Naive thymus-derived CD4-positive, alpha-beta T cell (primary cell): ENCODE measurements at regions of chr1 and their contacts with region 1.

Region 1: GRCh38 chr1:235971571-235972310 is 93.1 kb downstream of the NID1 start:
- DNase-seq: peak; percentile 71 to 87 (median 84)
- ATAC-seq: peak; percentile 98
- H3K4me3 ChIP-seq: peak overlapping the region; percentile 14
- H3K4me3 Mint-ChIP-seq: peak overlapping the region; percentile 67 to 82 (median 76)
- H3K27ac ChIP-seq: peak overlapping the region; percentile 59
- H3K27ac Mint-ChIP-seq: peak overlapping the region; percentile 87 to 95 (median 90)
- H3K4me1 ChIP-seq: peaks cover 9 to 14% of the 10 kb centered on the region in 2 donors
- H3K4me1 Mint-ChIP-seq: peaks cover 9 to 19% (median 13%) of the 10 kb centered on the region in 7 donors
- H3K27me3 ChIP-seq: no peaks in the 10 kb centered on the region
- H3K27me3 Mint-ChIP-seq: peaks cover 0 to 26% (median 0%) of the 10 kb centered on the region in 5 donors

Region 2: GRCh38 chr1:235093696-235094592 is 877.8 kb before region 1 on chr1:
- CTCF ChIA-PET with region 1: no interaction called
- POLR2A ChIA-PET with region 1: no interaction called
- intact Hi-C with region 1: loop called (anchors 5 kb)
- DNase-seq: peak; percentile 67 to 89 (median 80)
- ATAC-seq: peak; percentile 97
- H3K4me3 ChIP-seq: no peak overlapping the region
- H3K4me3 Mint-ChIP-seq: peak overlapping the region in 1 of 10 donors; percentile 41
- H3K27ac ChIP-seq: no peak overlapping the region
- H3K27ac Mint-ChIP-seq: peak overlapping the region in 3 of 9 donors; percentile 49 to 88 (median 50)
- H3K4me1 ChIP-seq: peaks cover 0 to 3% of the 10 kb centered on the region in 2 donors
- H3K4me1 Mint-ChIP-seq: peaks cover 6 to 14% (median 7%) of the 10 kb centered on the region in 7 donors
- H3K27me3 ChIP-seq: no peaks in the 10 kb centered on the region
- H3K27me3 Mint-ChIP-seq: peaks cover 0 to 6% (median 0%) of the 10 kb centered on the region in 5 donors

Region 3: DNA sequence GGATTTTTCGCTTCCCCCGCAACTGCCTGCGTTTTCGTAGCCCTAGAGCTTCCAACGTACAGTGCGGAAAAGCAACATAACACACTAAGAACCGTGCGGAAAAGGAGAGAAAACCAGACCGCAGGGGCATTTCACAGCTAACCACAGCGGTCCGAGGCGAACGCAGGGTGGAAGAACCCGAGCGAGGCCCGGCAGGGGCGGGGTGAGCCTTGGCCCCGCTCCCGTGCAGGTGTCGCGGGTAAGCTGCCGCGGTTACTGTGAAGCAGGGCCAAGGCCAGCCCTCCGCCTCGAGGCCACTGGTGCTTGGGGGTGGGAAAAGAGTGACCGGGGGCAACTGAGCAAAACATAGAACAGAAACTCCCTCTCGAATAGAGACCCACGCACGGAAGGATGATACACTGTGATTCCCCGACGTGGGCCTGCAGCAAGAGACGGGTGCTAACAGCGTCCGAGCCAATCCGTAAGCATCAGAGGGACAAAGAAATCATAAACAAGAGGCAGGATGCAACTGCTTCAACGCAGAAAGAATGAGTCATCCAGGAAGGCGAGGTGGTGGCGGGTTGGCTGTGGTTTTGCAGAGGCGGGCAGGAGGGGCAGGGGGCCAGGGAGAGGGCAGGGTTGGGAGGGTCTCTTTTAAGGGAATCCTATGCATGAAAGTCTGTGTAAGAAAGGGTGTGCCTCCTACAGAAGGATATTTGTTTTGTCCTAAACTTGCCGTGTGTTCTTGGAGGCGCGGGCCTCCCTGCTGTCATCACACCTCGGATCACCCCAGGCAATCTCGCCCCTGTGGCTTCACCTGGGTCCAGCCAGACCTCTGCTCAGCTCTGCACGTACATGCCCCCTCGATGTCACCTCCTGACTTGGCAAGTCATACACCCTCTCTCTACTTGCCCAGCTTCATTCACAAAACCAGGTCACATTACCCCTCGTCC is 329.5 kb before region 1 on chr1:
- CTCF ChIA-PET with region 1: no interaction called
- POLR2A ChIA-PET with region 1: no interaction called
- intact Hi-C with region 1: loop called in 1 of 2 experiments (anchors 2 kb)
- DNase-seq: peak; percentile 20 to 88 (median 40)
- ATAC-seq: peak; percentile 86
- H3K4me3 ChIP-seq: peak overlapping the region; percentile 42
- H3K4me3 Mint-ChIP-seq: peak overlapping the region; percentile 57 to 90 (median 82)
- H3K27ac ChIP-seq: no peak overlapping the region
- H3K27ac Mint-ChIP-seq: peak overlapping the region; percentile 8 to 95 (median 79)
- H3K4me1 ChIP-seq: peaks cover 4 to 26% of the 10 kb centered on the region in 2 donors
- H3K4me1 Mint-ChIP-seq: peaks cover 15 to 57% (median 19%) of the 10 kb centered on the region in 7 donors
- H3K27me3 ChIP-seq: no peaks in the 10 kb centered on the region
- H3K27me3 Mint-ChIP-seq: peaks cover 19 to 33% (median 29%) of the 10 kb centered on the region in 5 donors

Region 4: DNA sequence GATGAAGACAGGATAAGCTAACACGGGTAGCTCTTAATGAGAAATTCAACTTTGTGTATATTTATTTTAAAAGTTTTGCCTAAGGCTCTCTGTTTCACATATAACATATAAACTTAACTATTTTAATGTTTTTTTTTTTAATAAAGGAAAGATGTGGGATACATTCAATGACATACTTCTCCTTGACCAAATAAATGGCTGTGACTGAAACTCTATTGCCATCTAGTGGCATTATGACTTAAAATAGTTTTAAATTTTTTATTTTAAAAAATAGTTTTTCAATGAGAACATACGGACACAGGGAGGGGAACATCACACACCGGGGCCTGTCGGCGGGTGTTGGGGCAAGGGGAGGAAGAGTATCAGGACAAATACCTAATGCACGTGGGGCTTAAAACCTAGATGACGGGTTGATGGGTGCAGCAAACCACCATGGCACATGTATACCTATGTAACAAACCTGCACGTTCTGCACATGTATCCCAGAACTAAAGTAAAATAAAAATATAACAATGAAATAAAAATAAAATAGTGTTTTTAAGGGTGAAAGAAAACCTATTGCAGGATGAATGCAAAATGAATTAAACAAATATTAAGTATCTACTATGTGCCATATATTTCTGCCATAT is 188.5 kb before region 1 on chr1:
- CTCF ChIA-PET with region 1: interaction called, 7 read pairs
- POLR2A ChIA-PET with region 1: no interaction called
- intact Hi-C with region 1: loop called (anchors 1 to 5 kb)
- DNase-seq: peak in 5 of 9 donors; percentile 1 to 20 (median 4)
- ATAC-seq: no peak
- H3K4me3 ChIP-seq: no peak overlapping the region
- H3K4me3 Mint-ChIP-seq: no peak overlapping the region
- H3K27ac ChIP-seq: no peak overlapping the region
- H3K27ac Mint-ChIP-seq: no peak overlapping the region
- H3K4me1 ChIP-seq: no peaks in the 10 kb centered on the region
- H3K4me1 Mint-ChIP-seq: no peaks in the 10 kb centered on the region
- H3K27me3 ChIP-seq: no peaks in the 10 kb centered on the region
- H3K27me3 Mint-ChIP-seq: no peaks in the 10 kb centered on the region

Region 5: GRCh38 chr1:235888119-235888643 is 83.6 kb before region 1 on chr1:
- CTCF ChIA-PET with region 1: no interaction called
- POLR2A ChIA-PET with region 1: no interaction called
- intact Hi-C with region 1: loop called in 1 of 2 experiments (anchors 5 kb)
- DNase-seq: peak in 8 of 9 donors; percentile 9 to 54 (median 36)
- ATAC-seq: peak; percentile 90
- H3K4me3 ChIP-seq: peak overlapping the region; percentile 6
- H3K4me3 Mint-ChIP-seq: peak overlapping the region; percentile 49 to 89 (median 84)
- H3K27ac ChIP-seq: peak overlapping the region; percentile 70
- H3K27ac Mint-ChIP-seq: peak overlapping the region; percentile 86 to 98 (median 95)
- H3K4me1 ChIP-seq: peaks cover 0 to 22% of the 10 kb centered on the region in 2 donors
- H3K4me1 Mint-ChIP-seq: peaks cover 8 to 50% (median 21%) of the 10 kb centered on the region in 7 donors
- H3K27me3 ChIP-seq: no peaks in the 10 kb centered on the region
- H3K27me3 Mint-ChIP-seq: no peaks in the 10 kb centered on the region

Region 6: GRCh38 chr1:235960809-235961208 is 10.9 kb before region 1 on chr1:
- CTCF ChIA-PET with region 1: interaction called, 32 read pairs
- POLR2A ChIA-PET with region 1: interaction called, 4 read pairs
- intact Hi-C with region 1: no loop called
- DNase-seq: no peak
- ATAC-seq: no peak
- H3K4me3 ChIP-seq: no peak overlapping the region
- H3K4me3 Mint-ChIP-seq: no peak overlapping the region
- H3K27ac ChIP-seq: no peak overlapping the region
- H3K27ac Mint-ChIP-seq: no peak overlapping the region
- H3K4me1 ChIP-seq: peaks cover under 1 to 3% of the 10 kb centered on the region in 2 donors
- H3K4me1 Mint-ChIP-seq: peaks cover 7 to 20% (median 18%) of the 10 kb centered on the region in 7 donors
- H3K27me3 ChIP-seq: no peaks in the 10 kb centered on the region
- H3K27me3 Mint-ChIP-seq: peaks cover 0 to 24% (median 0%) of the 10 kb centered on the region in 5 donors